A673 (cell line): ENCODE measurements at regions of chr1 and their contacts with region 1.

Region 1: DNA sequence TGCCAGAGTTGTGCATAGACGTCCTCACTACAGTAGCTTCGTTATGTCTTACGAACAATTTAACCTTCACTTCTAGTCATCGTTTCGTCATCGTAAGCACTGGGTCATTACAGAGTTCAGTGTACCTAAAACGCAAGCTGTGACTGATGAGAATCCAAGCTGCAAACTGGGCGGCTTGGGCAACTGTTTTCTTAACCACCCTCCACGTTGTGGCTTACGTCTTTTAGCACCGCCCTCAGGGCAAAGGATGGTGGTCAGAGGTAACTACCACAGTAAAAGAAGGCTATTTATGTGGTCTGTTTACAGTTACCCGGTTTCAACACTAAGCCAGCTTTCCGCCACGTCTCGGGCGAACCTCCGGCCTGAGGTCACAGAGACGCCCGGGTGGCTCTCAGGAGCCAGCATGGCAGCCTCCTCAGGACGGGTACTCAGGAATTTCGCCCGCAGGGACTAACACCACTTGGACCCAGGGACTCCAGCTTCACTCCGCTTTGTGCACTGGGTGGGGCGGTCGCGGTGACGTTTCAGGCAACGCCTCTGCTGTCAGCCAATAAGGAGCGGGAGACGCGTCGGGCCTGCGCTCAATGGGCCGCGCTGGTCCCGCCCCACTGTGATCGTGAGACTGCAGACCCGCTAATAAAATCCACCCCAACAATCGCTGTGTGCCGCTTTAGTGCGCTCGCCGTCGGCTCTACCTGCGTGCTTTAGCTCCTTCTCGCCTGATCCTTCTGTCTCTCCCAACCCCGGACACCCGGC is at the start of gene CTH:
- DNase-seq: peak; percentile 98
- H3K4me3 ChIP-seq: peak within 1 kb of the TSS; percentile 69
- H3K27ac ChIP-seq: peak within 1 kb of the TSS; percentile 91
- H3K4me1 ChIP-seq: peaks cover 8% of the 10 kb centered on the region
- H3K27me3 ChIP-seq: no peaks in the 10 kb centered on the region
- CTCF ChIP-seq: no peak
- total RNA-seq, gene CTH: 23.5 and 32.6 TPM in 2 replicates

Region 2: DNA sequence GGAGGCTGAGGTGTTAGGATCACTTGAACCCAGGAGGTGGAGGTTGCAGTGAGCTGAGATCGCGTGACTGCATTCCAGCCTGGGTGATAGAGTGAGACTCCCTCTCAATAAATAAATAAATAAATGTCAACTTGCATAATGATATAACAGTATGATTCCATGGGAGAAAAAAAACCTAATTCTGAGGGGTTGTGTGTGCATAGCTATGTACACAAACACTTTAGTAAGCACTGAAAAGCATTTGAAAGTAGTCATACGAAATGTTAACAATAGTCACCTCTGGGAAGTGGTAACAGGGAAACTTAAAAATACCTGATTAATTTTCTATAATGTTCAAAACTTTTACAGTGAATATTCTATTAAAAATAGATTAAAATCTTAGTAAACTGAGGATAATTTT is 99.4 kb before region 1 on chr1:
- CTCF ChIA-PET with region 1: no interaction called
- POLR2A ChIA-PET with region 1: interaction called, 18 read pairs
- intact Hi-C with region 1: no loop called
- DNase-seq: no peak
- H3K4me3 ChIP-seq: no peak overlapping the region
- H3K27ac ChIP-seq: no peak overlapping the region
- H3K4me1 ChIP-seq: no peaks in the 10 kb centered on the region
- H3K27me3 ChIP-seq: no peaks in the 10 kb centered on the region
- CTCF ChIP-seq: no peak